Left lung (tissue), 14 donors: ENCODE measurements at regions of chr2 and their contacts with region 1.

Region 1: DNA sequence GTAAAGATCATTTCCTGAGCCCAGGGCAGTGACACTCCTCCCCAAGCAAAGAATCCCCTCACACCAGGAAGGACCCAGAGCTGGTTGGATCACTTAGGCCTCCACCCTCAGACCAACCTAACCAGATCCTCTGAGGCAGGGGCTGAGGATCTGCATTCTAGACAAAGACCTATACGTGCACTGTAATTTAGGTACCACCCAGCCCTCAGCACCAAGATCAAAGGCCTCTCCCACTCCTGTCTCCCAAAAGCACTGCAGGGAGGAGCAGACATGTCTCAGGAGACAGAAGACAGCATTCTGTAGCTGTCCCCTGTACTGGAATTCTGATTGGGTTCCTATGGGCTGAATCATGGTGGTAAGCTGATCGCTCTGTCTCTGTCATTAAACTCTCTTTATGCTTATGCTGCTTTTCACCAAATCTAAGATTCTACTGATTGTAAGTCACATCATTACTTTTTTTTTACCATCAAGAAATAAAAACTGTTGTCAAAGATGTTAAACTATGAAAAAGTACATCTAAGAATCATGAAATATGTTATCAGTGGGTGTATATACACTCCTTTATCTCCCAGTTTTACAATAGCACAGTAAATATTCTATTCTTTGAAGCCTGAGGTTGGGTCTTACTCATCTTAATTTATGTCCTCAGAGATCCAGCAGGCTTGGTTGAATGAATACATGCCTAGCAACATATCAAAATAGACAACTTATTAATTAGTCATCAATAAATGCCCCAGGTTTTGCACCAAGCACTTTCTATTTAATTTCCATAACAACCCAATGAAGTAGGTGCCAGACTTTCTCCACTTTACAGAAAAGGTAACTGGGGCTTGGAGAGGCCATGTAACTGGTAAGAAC is 28.3 kb downstream of the MCFD2 start:
- DNase-seq: no peak
- ATAC-seq: no peak
- H3K4me3 ChIP-seq: no peak overlapping the region
- H3K27ac ChIP-seq: no peak overlapping the region
- H3K4me1 ChIP-seq: peaks cover 0 to 5% of the 10 kb centered on the region in 2 donors
- H3K27me3 ChIP-seq: no peaks in the 10 kb centered on the region
- CTCF ChIP-seq: no peak

Region 2: GRCh38 chr2:46632349-46632748 is 254.9 kb before region 1 on chr2:
- intact Hi-C with region 1: loop called in 1 of 2 experiments (anchors 5 kb)
- DNase-seq: peak in 1 of 4 donors; percentile 54
- ATAC-seq: peak; percentile 76
- H3K4me3 ChIP-seq: no peak overlapping the region
- H3K27ac ChIP-seq: no peak overlapping the region
- H3K4me1 ChIP-seq: no peaks in the 10 kb centered on the region
- H3K27me3 ChIP-seq: no peaks in the 10 kb centered on the region
- CTCF ChIP-seq: peak; percentile 29 to 60